CD4-positive, alpha-beta T cell (primary cell): ENCODE measurements at regions of chr6 and their contacts with region 1.

Region 1: DNA sequence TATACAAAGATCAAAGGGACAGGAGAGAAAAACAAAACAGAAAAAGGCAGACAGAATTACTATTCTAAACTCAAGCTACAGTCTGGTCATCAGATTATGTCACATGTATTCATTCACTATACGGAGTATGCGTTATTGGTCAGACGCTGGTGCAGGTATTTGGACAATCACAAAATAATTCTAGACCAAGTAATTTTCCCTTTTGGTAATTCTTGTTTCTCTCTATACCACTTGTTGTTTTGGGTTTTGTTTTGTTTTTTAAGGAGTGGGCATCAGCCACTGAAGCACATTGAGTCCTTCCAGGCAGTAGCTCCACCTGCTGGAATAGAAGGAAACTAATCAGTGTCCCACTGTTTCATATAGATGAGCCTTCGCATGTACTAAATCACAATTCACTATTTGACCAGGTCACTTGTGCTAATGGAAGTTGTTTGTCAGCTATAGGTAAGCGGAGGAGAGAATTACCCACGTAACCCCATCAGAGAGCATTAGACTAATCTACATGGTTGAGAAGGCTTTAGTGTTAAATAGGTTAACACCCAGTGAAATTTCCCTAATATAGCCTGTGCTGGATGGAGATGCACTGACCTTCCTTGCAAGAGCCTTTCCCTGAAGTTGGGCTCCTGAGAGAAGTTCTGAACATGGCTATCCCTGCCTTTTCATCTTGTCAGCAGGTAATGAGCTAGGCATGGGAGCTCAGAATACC is 77.9 kb downstream of the TNFAIP3 start:
- DNase-seq: peak in 5 of 14 experiments; percentile 10 to 69 (median 53)
- ATAC-seq: peak; percentile 71
- H3K4me3 ChIP-seq: no peak overlapping the region
- H3K4me3 Mint-ChIP-seq: no peak overlapping the region
- H3K27ac ChIP-seq: no peak overlapping the region
- H3K27ac Mint-ChIP-seq: no peak overlapping the region
- H3K4me1 ChIP-seq: peaks cover 5% of the 10 kb centered on the region
- H3K4me1 Mint-ChIP-seq: peaks cover 20% of the 10 kb centered on the region
- H3K27me3 ChIP-seq: no peaks in the 10 kb centered on the region
- H3K27me3 Mint-ChIP-seq: no peaks in the 10 kb centered on the region
- CTCF ChIP-seq: peak; percentile 96

Region 2: DNA sequence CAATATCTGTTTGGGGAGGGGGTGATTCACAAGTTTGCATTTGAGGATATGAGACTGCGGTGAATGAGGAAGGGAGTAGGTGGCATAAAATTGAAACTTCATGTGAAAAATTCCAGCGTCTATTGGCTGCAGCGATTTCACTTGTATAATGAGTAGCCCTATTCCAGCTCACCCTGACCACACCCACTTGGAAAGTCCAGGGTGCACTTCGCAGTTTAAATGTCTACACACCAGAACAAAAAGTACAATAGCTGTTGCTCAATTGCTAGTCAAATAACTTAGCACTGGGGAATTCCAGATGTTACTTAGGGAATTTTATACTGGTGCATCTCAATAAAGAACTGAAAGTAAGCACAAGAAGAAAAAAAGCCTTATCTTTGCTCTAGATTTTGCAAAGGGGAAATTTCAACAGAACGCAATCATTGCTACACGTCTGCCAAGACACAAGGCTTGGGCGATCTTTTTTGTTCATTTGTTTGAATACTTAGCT is 71.6 kb before region 1 on chr6:
- CTCF ChIA-PET with region 1: interaction called, 6 read pairs
- POLR2A ChIA-PET with region 1: interaction called, 22 read pairs
- intact Hi-C with region 1: loop called in 1 of 2 experiments (anchors 5 kb)
- DNase-seq: peak in 5 of 14 experiments; percentile 31 to 92 (median 67)
- ATAC-seq: peak; percentile 3
- H3K4me3 ChIP-seq: peak overlapping the region; percentile 21
- H3K4me3 Mint-ChIP-seq: peak overlapping the region; percentile 96
- H3K27ac ChIP-seq: peak overlapping the region in 1 of 2 donors; percentile 96
- H3K27ac Mint-ChIP-seq: peak overlapping the region; percentile 95
- H3K4me1 ChIP-seq: peaks cover 47% of the 10 kb centered on the region
- H3K4me1 Mint-ChIP-seq: peaks cover 87% of the 10 kb centered on the region
- H3K27me3 ChIP-seq: no peaks in the 10 kb centered on the region
- H3K27me3 Mint-ChIP-seq: no peaks in the 10 kb centered on the region
- CTCF ChIP-seq: no peak

Region 3: DNA sequence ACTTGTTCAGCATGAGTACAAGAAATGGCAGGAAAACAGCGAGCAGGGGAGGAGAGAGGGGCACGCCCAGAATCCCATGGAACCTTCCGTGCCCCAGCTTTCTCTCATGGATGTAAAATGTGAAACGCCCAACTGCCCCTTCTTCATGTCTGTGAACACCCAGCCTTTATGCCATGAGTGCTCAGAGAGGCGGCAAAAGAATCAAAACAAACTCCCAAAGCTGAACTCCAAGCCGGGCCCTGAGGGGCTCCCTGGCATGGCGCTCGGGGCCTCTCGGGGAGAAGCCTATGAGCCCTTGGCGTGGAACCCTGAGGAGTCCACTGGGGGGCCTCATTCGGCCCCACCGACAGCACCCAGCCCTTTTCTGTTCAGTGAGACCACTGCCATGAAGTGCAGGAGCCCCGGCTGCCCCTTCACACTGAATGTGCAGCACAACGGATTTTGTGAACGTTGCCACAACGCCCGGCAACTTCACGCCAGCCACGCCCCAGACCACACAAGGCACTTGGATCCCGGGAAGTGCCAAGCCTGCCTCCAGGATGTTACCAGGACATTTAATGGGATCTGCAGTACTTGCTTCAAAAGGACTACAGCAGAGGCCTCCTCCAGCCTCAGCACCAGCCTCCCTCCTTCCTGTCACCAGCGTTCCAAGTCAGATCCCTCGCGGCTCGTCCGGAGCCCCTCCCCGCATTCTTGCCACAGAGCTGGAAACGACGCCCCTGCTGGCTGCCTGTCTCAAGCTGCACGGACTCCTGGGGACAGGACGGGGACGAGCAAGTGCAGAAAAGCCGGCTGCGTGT is 66.3 kb before region 1 on chr6:
- CTCF ChIA-PET with region 1: interaction called, 6 read pairs
- POLR2A ChIA-PET with region 1: interaction called, 3 read pairs
- intact Hi-C with region 1: loop called in 1 of 2 experiments (anchors 2 kb)
- DNase-seq: peak in 4 of 14 experiments; percentile 22 to 62 (median 46)
- ATAC-seq: no peak
- H3K4me3 ChIP-seq: no peak overlapping the region
- H3K4me3 Mint-ChIP-seq: peak overlapping the region; percentile 76
- H3K27ac ChIP-seq: peak overlapping the region in 1 of 2 donors; percentile 37
- H3K27ac Mint-ChIP-seq: peak overlapping the region; percentile 95
- H3K4me1 ChIP-seq: peaks cover 68% of the 10 kb centered on the region
- H3K4me1 Mint-ChIP-seq: peaks cover 88% of the 10 kb centered on the region
- H3K27me3 ChIP-seq: no peaks in the 10 kb centered on the region
- H3K27me3 Mint-ChIP-seq: peaks cover 8% of the 10 kb centered on the region
- CTCF ChIP-seq: no peak

Region 4: DNA sequence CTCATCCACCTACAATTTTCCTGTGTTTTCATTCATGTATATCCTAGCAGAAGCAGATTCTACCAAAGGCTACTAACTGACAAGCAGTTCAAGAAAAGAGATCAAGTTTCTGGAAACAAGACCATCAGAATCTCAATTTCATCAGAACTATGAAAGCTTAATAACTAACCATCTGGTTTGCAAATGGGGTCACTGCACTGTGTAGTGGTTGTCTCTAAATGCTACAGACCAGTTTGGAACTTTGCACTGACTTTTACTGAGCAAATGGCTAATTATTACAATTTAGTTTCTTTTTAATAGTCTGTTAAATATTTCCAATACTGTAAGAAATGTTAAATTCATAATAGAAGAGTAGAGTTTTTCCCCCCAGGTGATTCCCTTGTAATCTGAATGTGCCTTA is 978.6 kb after region 1 on chr6:
- CTCF ChIA-PET with region 1: no interaction called
- POLR2A ChIA-PET with region 1: no interaction called
- intact Hi-C with region 1: no loop called
- DNase-seq: no peak
- ATAC-seq: no peak
- H3K4me3 ChIP-seq: no peak overlapping the region
- H3K4me3 Mint-ChIP-seq: no peak overlapping the region
- H3K27ac ChIP-seq: no peak overlapping the region
- H3K27ac Mint-ChIP-seq: no peak overlapping the region
- H3K4me1 ChIP-seq: no peaks in the 10 kb centered on the region
- H3K4me1 Mint-ChIP-seq: no peaks in the 10 kb centered on the region
- H3K27me3 ChIP-seq: no peaks in the 10 kb centered on the region
- H3K27me3 Mint-ChIP-seq: no peaks in the 10 kb centered on the region
- CTCF ChIP-seq: no peak